PC-9 (cell line): ENCODE measurements at regions of chr9 and their contacts with region 1.

Region 1: DNA sequence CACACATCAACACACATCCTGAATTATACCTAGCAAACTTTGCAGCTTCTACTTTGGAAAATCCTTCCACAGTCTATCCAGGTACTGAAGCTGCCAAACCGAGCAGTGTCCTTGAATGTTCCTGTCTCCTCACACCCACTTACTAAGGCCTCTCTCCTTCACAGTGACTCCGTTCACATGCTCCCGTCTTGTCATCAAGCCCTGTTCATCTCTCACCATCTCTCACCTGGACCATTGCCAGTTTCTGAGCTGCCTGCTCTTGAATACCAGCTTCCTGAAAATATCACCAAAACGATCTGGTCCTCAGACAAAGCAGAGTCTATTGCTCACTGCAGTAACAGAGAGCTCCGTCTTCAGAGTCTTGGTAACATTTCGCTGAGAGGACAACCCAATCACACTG is 57.4 kb downstream of the GCNT1 start:
- DNase-seq: no peak
- H3K4me3 ChIP-seq: no peak overlapping the region
- H3K27ac ChIP-seq: no peak overlapping the region
- H3K4me1 ChIP-seq: peaks cover 28% of the 10 kb centered on the region
- H3K27me3 ChIP-seq: no peaks in the 10 kb centered on the region
- CTCF ChIP-seq: no peak

Region 2: DNA sequence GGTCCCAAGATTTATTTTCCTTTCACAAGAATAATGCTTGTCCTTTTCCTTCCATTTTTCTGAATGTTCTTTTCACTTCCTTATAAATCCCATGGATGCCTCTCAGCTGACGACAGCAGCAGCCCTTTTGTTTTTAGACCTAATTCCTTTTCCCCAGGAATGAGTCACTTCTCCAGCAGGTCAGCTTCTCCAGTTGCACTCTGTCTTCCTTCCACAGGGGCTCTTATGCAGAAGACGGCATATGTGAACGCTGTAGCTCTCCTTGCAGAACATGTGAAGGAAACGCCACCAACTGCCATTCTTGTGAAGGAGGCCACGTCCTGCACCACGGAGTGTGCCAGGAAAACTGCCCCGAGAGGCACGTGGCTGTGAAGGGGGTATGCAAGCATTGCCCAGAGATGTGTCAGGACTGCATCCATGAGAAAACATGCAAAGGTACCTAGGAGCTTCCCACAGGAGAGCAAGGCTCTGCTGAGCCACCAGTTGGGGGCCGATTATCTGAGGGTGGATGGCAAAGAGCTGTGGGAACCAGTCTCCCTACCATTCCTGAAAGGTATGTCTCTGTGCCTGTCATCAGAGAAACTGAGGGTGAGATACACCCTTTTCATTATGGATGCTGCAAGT is 195.0 kb before region 1 on chr9:
- CTCF ChIA-PET with region 1: no interaction called
- POLR2A ChIA-PET with region 1: no interaction called
- intact Hi-C with region 1: loop called (anchors 2 kb)
- DNase-seq: peak; percentile 58 to 86
- H3K4me3 ChIP-seq: no peak overlapping the region
- H3K27ac ChIP-seq: peak overlapping the region; percentile 82
- H3K4me1 ChIP-seq: peaks cover 34% of the 10 kb centered on the region
- H3K27me3 ChIP-seq: no peaks in the 10 kb centered on the region
- CTCF ChIP-seq: no peak

Region 3: DNA sequence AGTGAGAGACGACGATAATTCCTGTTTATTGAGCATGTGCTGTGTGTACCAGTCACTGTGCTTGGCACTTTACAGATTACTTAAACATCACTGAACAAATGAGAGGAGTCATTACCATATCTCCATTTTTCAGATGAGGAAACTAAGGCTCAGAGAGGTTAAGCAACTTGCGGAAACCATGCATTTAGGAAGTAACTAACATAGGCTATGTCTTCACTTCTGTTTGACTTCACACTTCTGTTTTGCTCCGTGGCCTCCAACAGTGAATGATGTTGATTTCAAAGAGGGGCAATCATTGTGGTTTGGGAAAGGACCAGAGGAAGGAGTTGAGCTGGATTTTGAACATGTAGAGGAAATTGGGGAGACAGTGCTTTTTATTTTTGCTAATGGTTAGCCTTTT is 40.7 kb before region 1 on chr9:
- CTCF ChIA-PET with region 1: no interaction called
- POLR2A ChIA-PET with region 1: interaction called, 14 read pairs
- intact Hi-C with region 1: no loop called
- DNase-seq: no peak
- H3K4me3 ChIP-seq: no peak overlapping the region
- H3K27ac ChIP-seq: no peak overlapping the region
- H3K4me1 ChIP-seq: no peaks in the 10 kb centered on the region
- H3K27me3 ChIP-seq: no peaks in the 10 kb centered on the region
- CTCF ChIP-seq: no peak

Region 4: GRCh38 chr9:76576344-76576743 is 60.0 kb after region 1 on chr9:
- CTCF ChIA-PET with region 1: no interaction called
- POLR2A ChIA-PET with region 1: no interaction called
- intact Hi-C with region 1: loop called (anchors 1 kb)
- DNase-seq: no peak
- H3K4me3 ChIP-seq: peak overlapping the region; percentile 54; the same call in 1 of the 2 replicates
- H3K27ac ChIP-seq: peak overlapping the region; percentile 88; the same call in 1 of the 2 replicates
- H3K4me1 ChIP-seq: peaks cover 14% of the 10 kb centered on the region
- H3K27me3 ChIP-seq: no peaks in the 10 kb centered on the region
- CTCF ChIP-seq: no peak